ENCODE measurements at regions of chrX and their contacts with region 1.

Region 1: DNA sequence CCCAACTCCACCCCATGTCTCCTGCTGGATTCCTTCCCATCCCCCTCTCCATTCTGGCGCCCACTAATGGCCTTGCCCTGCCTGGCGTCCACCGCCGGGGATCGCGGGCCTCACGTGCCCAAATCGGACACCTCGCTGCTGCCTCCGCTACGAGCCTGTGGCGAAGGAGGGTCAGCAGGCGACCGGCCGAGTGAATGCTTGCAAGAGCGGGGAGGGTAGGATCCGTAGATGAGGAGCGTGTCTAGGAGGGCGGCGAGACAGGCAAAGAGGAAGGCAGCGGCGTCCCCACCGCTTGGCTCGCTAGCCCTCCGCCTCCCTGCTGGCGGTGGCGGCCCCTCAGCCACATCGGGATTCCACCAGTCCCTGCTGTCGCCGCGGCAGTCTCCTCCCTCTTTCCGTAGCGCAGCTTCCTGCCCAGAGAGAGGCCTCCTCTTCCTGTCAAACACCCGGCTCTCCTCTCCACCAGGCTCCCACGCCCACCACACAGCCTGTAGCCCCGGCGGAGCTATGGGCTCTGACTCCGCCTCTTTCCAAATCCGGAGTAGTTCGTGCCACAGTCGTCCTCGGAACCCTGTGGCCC is at the start of gene SPIN2B:
- DNase-seq: peak; percentile 75 to 85 (median 80)
- ATAC-seq: peak; percentile 96
- H3K4me3 ChIP-seq: peak within 1 kb of the TSS; percentile 53
- H3K27ac ChIP-seq: peak within 1 kb of the TSS; percentile 71
- H3K4me1 ChIP-seq: peaks cover 4 to 5% of the 10 kb centered on the region in 2 experiments; a peak in 4 of 5 replicates
- H3K27me3 ChIP-seq: no peaks in the 10 kb centered on the region
- CTCF ChIP-seq: no peak
- EP300 ChIP-seq: no peak
- POLR2A ChIP-seq: peak; percentile 85
- RAD21 ChIP-seq: no peak
- polyA plus RNA-seq, gene SPIN2B: 6.2 to 7.0 TPM

Region 2: DNA sequence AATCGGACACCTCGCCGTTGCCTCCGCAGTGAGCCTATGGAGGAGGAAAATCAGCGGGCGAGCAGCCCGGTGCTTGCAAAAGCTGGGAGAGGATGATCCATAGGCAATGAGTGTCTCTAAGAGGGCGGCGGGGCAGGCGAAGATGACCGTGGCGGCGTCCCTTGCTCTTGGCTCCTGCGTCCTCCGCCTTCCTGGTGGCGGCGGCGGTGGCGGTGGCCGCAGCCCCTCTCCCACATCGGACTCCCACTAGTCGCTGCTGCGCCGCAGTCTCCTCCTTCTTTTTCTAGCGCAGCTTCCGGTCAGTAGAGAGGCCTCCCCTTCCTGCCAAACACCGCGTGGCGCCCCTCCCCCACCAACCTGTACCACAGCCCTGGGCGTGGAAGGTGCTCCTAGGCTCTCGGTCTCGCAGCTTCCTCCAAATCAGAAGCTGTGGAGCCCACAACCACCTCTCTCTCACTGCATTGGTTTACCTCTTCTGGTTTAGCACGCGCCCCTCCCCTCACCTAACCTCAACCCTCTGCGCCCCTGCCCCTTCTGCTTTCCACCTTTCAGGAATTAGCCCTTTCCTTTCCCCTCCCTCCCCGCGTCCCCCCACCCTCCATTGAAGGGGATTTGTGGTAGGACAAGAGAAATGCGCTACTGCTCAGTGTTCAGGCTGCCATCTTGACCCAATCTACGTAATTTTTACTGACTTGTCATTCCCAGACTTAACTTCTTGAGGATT is 125.8 kb before region 1 on chrX and contains the start of gene SPIN3:
- CTCF ChIA-PET with region 1: no interaction called
- POLR2A ChIA-PET with region 1: no interaction called
- in situ Hi-C with region 1: no loop called
- intact Hi-C with region 1: loop called (anchors 10 kb)
- DNase-seq: peak; percentile 64 to 85 (median 67)
- ATAC-seq: peak; percentile 99
- H3K4me3 ChIP-seq: peak within 1 kb of the TSS; percentile 50
- H3K27ac ChIP-seq: peak within 1 kb of the TSS; percentile 65; the same call in 2 of the 3 replicates
- H3K4me1 ChIP-seq: peaks cover 0 to 4% of the 10 kb centered on the region in 2 experiments; a peak in 1 of 5 replicates
- H3K27me3 ChIP-seq: no peaks in the 10 kb centered on the region
- CTCF ChIP-seq: no peak
- EP300 ChIP-seq: no peak
- POLR2A ChIP-seq: peak; percentile 77
- RAD21 ChIP-seq: no peak
- polyA plus RNA-seq, gene SPIN3: 1.6 to 2.3 TPM

Region 3: GRCh38 chrX:57083143-57083542 is 38.1 kb before region 1 on chrX:
- CTCF ChIA-PET with region 1: no interaction called
- POLR2A ChIA-PET with region 1: no interaction called
- in situ Hi-C with region 1: no loop called
- intact Hi-C with region 1: no loop called
- DNase-seq: no peak
- ATAC-seq: no peak
- H3K4me3 ChIP-seq: no peak overlapping the region
- H3K27ac ChIP-seq: no peak overlapping the region
- H3K4me1 ChIP-seq: no peaks in the 10 kb centered on the region
- H3K27me3 ChIP-seq: no peaks in the 10 kb centered on the region
- CTCF ChIP-seq: no peak
- EP300 ChIP-seq: no peak
- POLR2A ChIP-seq: no peak
- RAD21 ChIP-seq: no peak